A549 (cell line): ENCODE measurements at regions of chr5 and their contacts with region 1.

Region 1: GRCh38 chr5:151825445-151825844 is 53.7 kb downstream of the G3BP1 start:
- DNase-seq: peak; percentile 54 to 56
- ATAC-seq: peak; percentile 72 to 86
- H3K4me3 ChIP-seq: no peak overlapping the region
- H3K27ac ChIP-seq: no peak overlapping the region
- H3K4me1 ChIP-seq: no peaks in the 10 kb centered on the region
- CTCF ChIP-seq: peak; percentile 73
- EP300 ChIP-seq: no peak
- POLR2A ChIP-seq: no peak
- RAD21 ChIP-seq: peak; percentile 80 to 82

Region 2: DNA sequence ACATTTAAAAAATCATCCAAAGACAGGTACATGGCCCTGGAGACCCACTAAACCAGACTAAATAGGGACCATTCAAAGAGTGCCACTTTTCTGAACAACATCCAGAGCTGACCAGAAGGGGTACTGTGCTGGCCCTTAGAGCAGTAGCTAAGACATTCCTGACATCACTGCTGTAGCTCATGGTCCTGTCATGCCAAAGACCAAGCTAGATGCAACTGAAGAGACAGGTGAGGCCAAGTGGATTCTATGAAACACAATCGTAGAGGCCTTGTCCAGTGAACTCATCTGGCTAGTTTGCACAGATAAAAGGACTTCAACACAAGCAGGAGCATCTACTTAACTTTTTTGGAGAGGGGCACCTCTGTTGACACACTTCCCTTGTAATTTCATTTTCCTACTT is 10.4 kb before region 1 on chr5:
- CTCF ChIA-PET with region 1: interaction called, 26 read pairs
- POLR2A ChIA-PET with region 1: no interaction called
- DNase-seq: no peak
- ATAC-seq: peak in 1 of 2 experiments; percentile 18; a peak in 3 of 6 replicates
- H3K4me3 ChIP-seq: no peak overlapping the region
- H3K27ac ChIP-seq: no peak overlapping the region
- H3K4me1 ChIP-seq: no peaks in the 10 kb centered on the region
- CTCF ChIP-seq: no peak
- EP300 ChIP-seq: no peak
- POLR2A ChIP-seq: no peak
- RAD21 ChIP-seq: no peak